Gastrocnemius medialis (tissue), 4 donors: ENCODE measurements at regions of chr4 and their contacts with region 1.

Region 1: GRCh38 chr4:142265536-142265935 is 580.6 kb downstream of the INPP4B start:
- DNase-seq: peak; percentile 61 to 69
- ATAC-seq: peak; percentile 98
- H3K4me3 ChIP-seq: peak overlapping the region in 3 of 4 donors; percentile 1 to 19 (median 12)
- H3K27ac ChIP-seq: peak overlapping the region; percentile 78 to 94 (median 86)
- H3K4me1 ChIP-seq: peaks cover 26 to 36% of the 10 kb centered on the region in 2 donors
- H3K27me3 ChIP-seq: no peaks in the 10 kb centered on the region
- CTCF ChIP-seq: no peak
- POLR2A ChIP-seq: no peak

Region 2: DNA sequence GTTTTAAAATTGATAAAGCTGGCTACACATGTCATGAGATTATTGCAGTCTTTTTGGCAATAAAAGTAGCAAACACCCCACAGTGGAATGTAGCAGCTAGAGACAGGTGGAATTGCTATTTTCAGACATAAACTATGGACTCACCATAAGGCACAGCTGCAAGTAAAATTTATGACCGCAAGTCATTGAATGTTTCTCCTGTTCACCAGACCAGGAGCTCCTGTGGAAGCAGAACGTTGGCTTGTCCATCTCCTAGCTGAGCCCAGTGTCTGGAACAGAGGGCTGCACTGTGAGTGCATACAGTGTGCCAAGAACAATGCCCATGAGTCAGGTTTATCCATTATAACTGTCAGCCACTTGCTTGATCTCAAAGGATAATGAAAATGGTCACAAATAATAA is 42.3 kb after region 1 on chr4:
- in situ Hi-C with region 1: no loop called
- intact Hi-C with region 1: loop called (anchors 5 kb)
- DNase-seq: peak; percentile 37 to 50
- ATAC-seq: peak; percentile 77 to 95
- H3K4me3 ChIP-seq: no peak overlapping the region
- H3K27ac ChIP-seq: peak overlapping the region in 3 of 4 donors; percentile 17 to 47 (median 37)
- H3K4me1 ChIP-seq: peaks cover 19 to 40% of the 10 kb centered on the region in 2 donors
- H3K27me3 ChIP-seq: no peaks in the 10 kb centered on the region
- CTCF ChIP-seq: no peak
- POLR2A ChIP-seq: no peak

Region 3: DNA sequence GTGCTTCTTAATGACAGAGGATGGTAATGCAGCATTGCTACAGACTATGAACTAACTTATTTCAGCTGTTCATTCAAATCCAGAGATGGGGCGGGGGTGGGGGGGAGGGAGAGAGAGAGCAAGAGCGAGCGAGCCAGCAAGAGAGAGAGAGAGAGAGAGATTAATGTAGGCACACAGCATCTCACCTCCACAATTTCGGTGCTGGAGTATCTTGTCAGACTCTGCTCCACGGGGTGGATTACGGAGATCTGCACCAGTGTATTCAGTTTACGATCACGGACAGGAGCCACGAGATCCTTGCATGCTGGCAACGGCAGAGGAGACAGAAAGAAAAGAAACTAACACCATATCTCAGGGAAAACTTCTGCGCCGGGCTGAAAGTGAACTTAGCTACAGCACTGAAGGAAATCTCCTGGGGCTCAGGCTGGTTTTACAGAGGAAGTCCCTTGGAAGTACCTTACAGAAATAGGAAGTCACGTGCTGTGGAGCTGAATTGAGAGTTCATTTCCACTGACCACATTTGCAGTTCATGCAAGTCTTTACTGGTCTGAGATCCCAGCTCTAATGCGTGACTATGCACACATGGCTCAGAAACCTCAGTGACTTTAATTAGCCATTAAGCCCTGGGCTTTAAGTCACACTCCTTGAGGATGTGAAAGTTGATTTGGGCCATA is 139.6 kb after region 1 on chr4:
- in situ Hi-C with region 1: no loop called
- intact Hi-C with region 1: loop called (anchors 5 kb)
- DNase-seq: peak; percentile 38 to 54
- ATAC-seq: peak; percentile 72 to 81
- H3K4me3 ChIP-seq: peak overlapping the region; percentile 57 to 61 (median 60)
- H3K27ac ChIP-seq: peak overlapping the region; percentile 82 to 91 (median 86)
- H3K4me1 ChIP-seq: peaks cover 20 to 48% of the 10 kb centered on the region in 2 donors
- H3K27me3 ChIP-seq: no peaks in the 10 kb centered on the region
- CTCF ChIP-seq: no peak
- POLR2A ChIP-seq: peak in 1 of 2 donors; percentile 56